WTC11 (cell line): ENCODE measurements at regions of chr7 and their contacts with region 1.

Region 1: DNA sequence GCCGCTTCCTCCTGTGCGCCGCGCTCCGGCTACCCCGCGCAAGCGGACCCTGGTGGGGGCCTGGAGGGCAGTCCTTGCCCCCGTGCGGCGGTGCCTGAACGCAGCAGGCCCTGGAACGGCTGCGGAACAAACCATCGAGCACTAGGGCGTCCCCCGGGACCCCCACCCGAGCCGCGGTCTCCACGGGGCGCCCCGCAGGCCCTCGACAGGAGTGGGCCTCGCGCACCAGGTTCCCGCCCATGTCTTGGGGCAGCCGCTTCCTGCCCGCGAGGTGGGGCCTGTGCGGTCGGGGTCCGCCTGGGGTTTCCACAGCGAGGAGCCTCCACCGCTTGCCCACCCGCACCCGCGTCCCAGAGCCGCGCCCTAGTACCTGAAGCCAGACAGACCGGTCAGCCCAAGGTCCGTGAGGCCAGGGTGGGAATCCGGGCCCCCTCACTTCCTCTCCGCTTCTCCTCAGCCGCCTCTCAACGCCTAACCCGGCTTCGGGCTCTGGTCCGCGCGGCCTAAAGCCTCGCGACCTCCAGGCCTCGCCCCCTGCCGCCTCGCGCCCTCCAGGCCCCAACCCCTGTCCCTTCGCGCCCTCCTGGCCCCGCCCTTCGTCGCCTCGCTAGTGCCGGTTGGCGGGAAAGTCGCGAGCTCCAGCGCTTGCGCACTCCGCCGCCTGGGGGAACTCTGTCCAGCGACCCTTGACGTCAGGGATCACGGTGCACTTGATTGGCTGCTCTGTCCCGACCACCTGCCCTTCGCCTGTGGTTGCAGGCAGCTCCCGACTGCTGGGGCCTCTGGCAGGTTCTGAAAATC is 7.0 kb upstream of the GBX1 start:
- DNase-seq: peak; percentile 82
- ATAC-seq: peak; percentile 62
- H3K4me3 Mint-ChIP-seq: no peak overlapping the region
- H3K27ac Mint-ChIP-seq: no peak overlapping the region
- H3K4me1 Mint-ChIP-seq: peaks cover 12% of the 10 kb centered on the region
- H3K27me3 Mint-ChIP-seq: peaks cover 84% of the 10 kb centered on the region
- CTCF ChIP-seq: no peak

Region 2: GRCh38 chr7:151085691-151086620 is 88.5 kb before region 1 on chr7 and contains the start of gene AGAP3:
- CTCF ChIA-PET with region 1: interaction called, 10 read pairs
- POLR2A ChIA-PET with region 1: no interaction called
- DNase-seq: peak; percentile 83
- ATAC-seq: peak; percentile 56
- H3K4me3 Mint-ChIP-seq: peak within 1 kb of the TSS; percentile 84
- H3K27ac Mint-ChIP-seq: peak within 1 kb of the TSS; percentile 67
- H3K4me1 Mint-ChIP-seq: peaks cover 40% of the 10 kb centered on the region
- H3K27me3 Mint-ChIP-seq: peaks cover 18% of the 10 kb centered on the region
- CTCF ChIP-seq: no peak
- total RNA-seq, gene AGAP3: 107 to 163 TPM (median 113 TPM) in 3 replicates

Region 3: DNA sequence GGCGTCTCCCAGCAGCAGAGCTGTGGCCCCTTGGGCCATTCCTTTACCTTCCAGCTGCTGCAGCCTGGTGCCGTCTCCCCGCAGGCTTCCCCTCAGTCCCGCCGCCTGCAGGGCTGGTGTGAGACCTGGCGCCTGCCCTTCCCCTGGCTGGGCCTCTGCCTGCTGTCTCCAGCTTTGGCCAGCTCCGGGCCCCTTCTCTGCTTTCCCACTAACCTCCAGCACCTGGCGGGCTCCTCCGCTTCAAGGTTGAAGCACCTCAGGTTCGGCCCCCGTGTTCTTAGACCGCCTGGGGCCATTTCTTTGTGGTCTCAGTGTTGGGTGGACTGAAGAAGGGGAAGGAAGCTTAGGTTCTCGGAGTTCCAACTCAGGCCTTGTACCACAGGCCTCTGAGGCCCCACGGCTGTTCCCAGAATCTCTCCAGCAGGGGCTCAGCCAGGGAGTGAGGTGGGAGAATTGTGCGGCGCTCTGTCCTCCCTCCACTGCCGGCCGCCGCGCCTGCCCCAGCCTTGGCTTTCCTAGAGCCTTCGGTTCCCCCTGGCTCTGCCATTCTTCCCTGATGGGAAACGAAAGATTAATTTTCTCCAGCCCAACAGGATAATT is 37.3 kb before region 1 on chr7:
- CTCF ChIA-PET with region 1: interaction called, 48 read pairs
- POLR2A ChIA-PET with region 1: no interaction called
- DNase-seq: peak; percentile 39
- ATAC-seq: peak; percentile 24
- H3K4me3 Mint-ChIP-seq: no peak overlapping the region
- H3K27ac Mint-ChIP-seq: no peak overlapping the region
- H3K4me1 Mint-ChIP-seq: peaks cover 21% of the 10 kb centered on the region
- H3K27me3 Mint-ChIP-seq: no peaks in the 10 kb centered on the region
- CTCF ChIP-seq: no peak

Region 4: DNA sequence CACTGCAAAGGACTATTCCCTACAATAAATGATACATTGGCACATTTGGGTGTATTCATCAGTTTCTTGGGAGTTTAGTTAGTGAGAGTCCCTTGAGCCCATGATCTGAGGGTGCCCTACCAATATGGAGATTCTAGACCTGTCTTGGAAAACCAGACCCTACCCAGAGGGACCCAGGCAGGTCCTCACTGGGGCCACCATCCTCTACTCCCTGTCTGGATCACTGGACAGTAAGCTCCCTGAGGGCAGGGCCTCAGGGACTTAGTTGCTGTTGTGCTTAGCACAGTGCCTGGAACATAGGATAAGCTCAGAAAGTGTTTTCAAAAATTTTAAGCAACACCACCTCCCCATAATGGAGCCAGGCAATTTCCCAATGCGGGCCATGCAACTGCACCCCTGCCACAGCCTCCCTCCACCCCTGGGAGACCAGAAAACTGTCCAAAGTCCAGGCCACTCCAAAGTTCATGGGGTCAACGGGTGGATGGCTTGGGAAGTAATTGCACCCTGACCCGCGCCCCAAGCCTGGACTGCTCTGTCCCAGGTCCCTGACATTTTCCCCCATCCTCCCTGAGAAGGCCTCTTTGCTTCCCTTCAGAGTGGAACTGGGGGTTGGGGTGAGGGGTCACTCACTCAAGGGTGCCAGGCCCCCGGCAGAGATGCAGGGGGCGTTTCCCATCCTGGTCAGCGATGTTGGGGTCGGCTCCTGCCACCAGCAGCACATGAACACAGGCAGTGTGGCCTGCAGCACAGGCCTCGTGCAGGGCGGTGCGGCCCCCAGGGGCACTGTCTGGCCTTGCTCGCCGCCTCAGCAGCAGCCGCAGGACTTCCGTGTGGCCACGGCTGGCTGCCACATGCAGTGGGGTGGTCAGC is 11.6 kb after region 1 on chr7:
- CTCF ChIA-PET with region 1: no interaction called
- POLR2A ChIA-PET with region 1: no interaction called
- DNase-seq: no peak
- ATAC-seq: no peak
- H3K4me3 Mint-ChIP-seq: no peak overlapping the region
- H3K27ac Mint-ChIP-seq: no peak overlapping the region
- H3K4me1 Mint-ChIP-seq: no peaks in the 10 kb centered on the region
- H3K27me3 Mint-ChIP-seq: no peaks in the 10 kb centered on the region; the same call in 1 of the 2 replicates
- CTCF ChIP-seq: no peak

Region 5: GRCh38 chr7:151210087-151210854 is 35.8 kb after region 1 on chr7 and contains the start of gene H2BK1:
- CTCF ChIA-PET with region 1: interaction called, 16 read pairs
- POLR2A ChIA-PET with region 1: no interaction called
- DNase-seq: peak; percentile 53
- ATAC-seq: peak; percentile 66
- H3K4me3 Mint-ChIP-seq: no peak within 1 kb of the TSS
- H3K27ac Mint-ChIP-seq: peak within 1 kb of the TSS; percentile 69; the same call in 1 of the 2 replicates
- H3K4me1 Mint-ChIP-seq: peaks cover 12% of the 10 kb centered on the region
- H3K27me3 Mint-ChIP-seq: no peaks in the 10 kb centered on the region; the same call in 1 of the 2 replicates
- CTCF ChIP-seq: no peak
- total RNA-seq, gene H2BK1: 0.87 TPM in 1 of 3 replicates, not detected in the others